Gastrocnemius medialis (tissue), 4 donors: ENCODE measurements at regions of chr16 and their contacts with region 1.

Region 1: DNA sequence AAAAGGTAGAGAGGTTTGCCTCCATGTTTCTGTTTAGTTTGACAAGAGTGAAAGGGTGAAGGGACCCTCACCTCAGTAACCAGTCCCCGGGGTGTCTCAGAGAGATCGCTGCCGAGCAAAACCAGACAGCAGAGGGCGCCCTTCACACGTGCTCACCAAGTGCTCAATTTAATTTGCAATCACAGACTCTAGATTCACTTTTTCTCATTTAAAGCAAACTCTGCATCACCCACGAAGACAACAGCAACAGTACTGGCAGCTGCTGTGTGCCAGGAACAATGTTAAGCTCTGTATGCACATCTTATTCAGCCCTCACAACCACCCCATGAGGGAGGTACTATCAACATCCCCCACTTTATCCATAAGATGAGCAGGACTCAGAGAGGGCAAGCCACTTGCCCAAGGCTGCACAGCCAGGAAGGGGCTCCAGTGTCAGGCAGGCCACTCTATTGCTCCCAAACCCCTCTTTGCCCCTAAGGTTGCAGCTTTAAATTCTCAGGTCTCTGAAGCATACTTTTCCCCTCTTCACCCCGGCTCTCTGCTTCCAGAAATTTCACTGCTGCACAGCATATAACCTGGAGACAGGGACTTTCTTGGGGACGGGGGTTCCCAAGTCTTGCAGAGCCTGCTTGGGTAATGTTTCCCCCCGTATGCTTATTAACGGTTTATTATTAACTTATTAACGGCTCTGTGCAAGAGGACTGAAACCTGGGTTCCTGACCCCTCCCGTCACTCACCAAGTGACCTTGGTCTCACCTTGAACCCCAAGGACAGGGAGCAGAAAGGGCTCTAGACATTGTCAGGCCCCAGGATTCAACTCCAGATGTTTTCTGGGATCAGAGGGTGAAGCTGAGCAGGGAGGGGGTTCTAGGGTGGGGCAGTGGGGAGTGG is 70.9 kb downstream of the CNGB1 start:
- DNase-seq: peak in 1 of 2 donors; percentile 27
- ATAC-seq: peak in 1 of 2 donors; percentile 68
- H3K4me3 ChIP-seq: no peak overlapping the region
- H3K27ac ChIP-seq: no peak overlapping the region
- H3K4me1 ChIP-seq: no peaks in the 10 kb centered on the region
- H3K27me3 ChIP-seq: peaks cover 0 to 16% (median 3%) of the 10 kb centered on the region in 3 donors
- CTCF ChIP-seq: peak; percentile 65 to 84 (median 77)
- POLR2A ChIP-seq: no peak

Region 2: GRCh38 chr16:58011652-58012051 is 111.6 kb after region 1 on chr16:
- in situ Hi-C with region 1: loop called in 2 of 4 experiments (anchors 10 kb)
- intact Hi-C with region 1: no loop called
- DNase-seq: no peak
- ATAC-seq: no peak
- H3K4me3 ChIP-seq: no peak overlapping the region
- H3K27ac ChIP-seq: no peak overlapping the region
- H3K4me1 ChIP-seq: no peaks in the 10 kb centered on the region
- H3K27me3 ChIP-seq: no peaks in the 10 kb centered on the region
- CTCF ChIP-seq: no peak
- POLR2A ChIP-seq: no peak

Region 3: DNA sequence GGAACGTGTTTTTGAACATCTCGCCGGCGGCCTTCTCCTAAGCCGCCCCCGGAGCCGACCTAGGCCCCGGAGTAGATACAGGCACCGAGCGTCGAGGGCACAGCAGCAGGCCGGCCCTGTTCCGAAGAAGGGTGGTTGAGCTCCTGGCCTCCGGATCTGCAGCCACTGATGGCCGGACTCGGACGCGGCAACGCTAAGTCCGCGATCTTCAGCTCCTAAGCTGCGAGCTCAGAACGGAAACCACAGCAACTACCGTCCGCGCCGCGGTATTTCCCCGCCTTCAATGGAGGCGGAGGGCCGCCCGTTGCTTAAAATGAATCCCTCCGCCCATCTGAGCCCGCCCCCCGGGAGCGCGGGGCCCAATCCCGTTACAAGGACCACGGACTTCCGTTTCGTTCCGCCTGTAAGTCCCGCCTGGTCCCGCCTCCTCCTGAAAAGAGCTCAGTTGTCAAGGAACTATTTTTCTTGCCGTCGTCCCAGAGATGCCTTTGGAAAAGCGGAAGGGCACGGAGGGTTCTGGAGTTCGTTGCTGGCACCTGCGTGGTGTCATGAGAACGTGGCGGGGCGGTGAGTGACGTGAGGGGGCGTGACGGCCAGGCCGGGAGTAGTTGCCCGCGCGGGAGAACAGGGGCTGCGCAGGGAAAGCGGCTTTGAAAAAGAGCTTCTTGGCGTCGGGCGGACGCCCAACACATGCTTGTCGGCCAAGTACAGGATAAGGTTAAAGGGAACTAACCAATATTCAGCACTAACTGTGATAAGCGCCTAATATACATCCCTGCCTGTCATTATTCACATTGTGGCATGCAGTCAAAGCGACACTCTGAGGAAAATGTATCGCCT is 229.3 kb after region 1 on chr16 and contains the start of gene CFAP20:
- in situ Hi-C with region 1: no loop called
- intact Hi-C with region 1: loop called (anchors 10 kb)
- DNase-seq: peak; percentile 99
- ATAC-seq: peak; percentile 99 to 100
- H3K4me3 ChIP-seq: peak within 1 kb of the TSS; percentile 84 to 92 (median 88)
- H3K27ac ChIP-seq: peak within 1 kb of the TSS; percentile 86 to 91 (median 90)
- H3K4me1 ChIP-seq: peaks cover 25 to 31% of the 10 kb centered on the region in 2 donors
- H3K27me3 ChIP-seq: no peaks in the 10 kb centered on the region
- CTCF ChIP-seq: peak in 2 of 5 experiments; percentile 15 to 16
- POLR2A ChIP-seq: peak; percentile 83 to 96
- total RNA-seq, gene CFAP20: 6.5 to 16.0 (median 9.1) TPM